Aorta (tissue), 5 donors: ENCODE measurements at regions of chr16 and their contacts with region 1.

Region 1: DNA sequence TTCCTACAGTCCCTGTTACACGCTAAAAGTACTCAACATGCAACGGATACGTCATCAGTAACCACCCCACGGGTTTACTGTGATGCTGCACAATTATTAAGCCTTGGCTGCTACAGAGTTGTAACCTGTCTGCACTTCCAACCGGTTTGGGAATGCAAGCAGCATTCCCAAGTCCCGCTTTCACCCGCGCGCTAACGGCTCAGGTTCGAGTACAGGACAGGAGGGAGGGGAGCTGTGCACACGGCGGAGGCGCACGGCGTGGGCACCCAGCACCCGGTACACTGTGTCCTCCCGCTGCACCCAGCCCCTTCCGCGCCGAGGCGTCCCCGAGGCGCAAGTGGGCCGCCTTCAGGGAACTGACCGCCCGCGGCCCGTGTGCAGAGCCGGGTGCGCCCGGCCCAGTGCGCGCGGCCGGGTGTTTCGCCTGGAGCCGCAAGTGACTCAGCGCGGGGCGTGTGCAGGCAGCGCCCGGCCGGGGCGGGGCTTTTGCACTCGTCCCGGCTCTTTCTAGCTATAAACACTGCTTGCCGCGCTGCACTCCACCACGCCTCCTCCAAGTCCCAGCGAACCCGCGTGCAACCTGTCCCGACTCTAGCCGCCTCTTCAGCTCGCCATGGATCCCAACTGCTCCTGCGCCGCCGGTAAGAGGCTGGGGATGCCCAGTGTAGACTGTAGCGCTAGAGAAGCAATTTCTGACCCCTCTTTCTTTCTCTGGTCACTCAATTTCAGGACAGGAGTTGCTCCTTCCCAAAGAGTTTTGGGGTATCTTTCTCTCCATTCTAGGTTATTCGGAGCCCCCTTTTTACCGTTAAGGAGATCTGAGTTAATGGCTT is at the start of gene MT2A:
- DNase-seq: peak; percentile 98
- ATAC-seq: peak; percentile 92
- H3K4me3 ChIP-seq: peak within 1 kb of the TSS; percentile 60 to 96
- H3K27ac ChIP-seq: peak within 1 kb of the TSS; percentile 51 to 85
- H3K4me1 ChIP-seq: peaks cover 0 to 5% of the 10 kb centered on the region in 2 donors
- H3K27me3 ChIP-seq: no peaks in the 10 kb centered on the region
- total RNA-seq, gene MT2A: 146 to 1,375 TPM

Region 2: GRCh38 chr16:56519459-56520250 is 88.6 kb before region 1 on chr16 and contains the start of gene BBS2:
- intact Hi-C with region 1: loop called in 1 of 2 experiments (anchors 10 kb)
- DNase-seq: peak; percentile 94 to 96
- ATAC-seq: peak; percentile 95
- H3K4me3 ChIP-seq: peak within 1 kb of the TSS; percentile 61 to 94
- H3K27ac ChIP-seq: peak within 1 kb of the TSS in 1 of 2 donors; percentile 64
- H3K4me1 ChIP-seq: peaks cover 3% of the 10 kb centered on the region in 2 donors
- H3K27me3 ChIP-seq: no peaks in the 10 kb centered on the region
- total RNA-seq, gene BBS2: 40.3 to 41.0 TPM

Region 3: GRCh38 chr16:56625943-56626654 is 17.8 kb after region 1 on chr16:
- intact Hi-C with region 1: loop called in 1 of 2 experiments (anchors 1 kb)
- DNase-seq: peak; percentile 82 to 92
- ATAC-seq: peak; percentile 89
- H3K4me3 ChIP-seq: peak overlapping the region; percentile 38 to 71
- H3K27ac ChIP-seq: peak overlapping the region; percentile 43 to 95
- H3K4me1 ChIP-seq: no peaks in the 10 kb centered on the region
- H3K27me3 ChIP-seq: no peaks in the 10 kb centered on the region

Region 4: GRCh38 chr16:56643080-56643778 is 35.0 kb after region 1 on chr16:
- intact Hi-C with region 1: loop called (anchors 2 to 5 kb)
- DNase-seq: peak; percentile 89 to 93
- ATAC-seq: peak; percentile 89
- H3K4me3 ChIP-seq: no peak overlapping the region
- H3K27ac ChIP-seq: peak overlapping the region in 1 of 2 donors; percentile 15
- H3K4me1 ChIP-seq: no peaks in the 10 kb centered on the region
- H3K27me3 ChIP-seq: no peaks in the 10 kb centered on the region

Region 5: GRCh38 chr16:56681939-56682702 is 73.9 kb after region 1 on chr16 and contains the start of gene MT1X:
- intact Hi-C with region 1: loop called in 1 of 2 experiments (anchors 5 kb)
- DNase-seq: peak; percentile 96 to 97
- ATAC-seq: peak; percentile 98
- H3K4me3 ChIP-seq: peak within 1 kb of the TSS; percentile 55 to 66
- H3K27ac ChIP-seq: peak within 1 kb of the TSS in 1 of 2 donors; percentile 48
- H3K4me1 ChIP-seq: no peaks in the 10 kb centered on the region
- H3K27me3 ChIP-seq: no peaks in the 10 kb centered on the region
- total RNA-seq, gene MT1X: 62.0 to 559 TPM